Natural killer cell (primary cell): ENCODE measurements at regions of chr1 and their contacts with region 1.

Region 1: GRCh38 chr1:145906954-145907753 is 2.7 kb downstream of the ITGA10 start:
- DNase-seq: no peak
- ATAC-seq: no peak
- H3K4me3 ChIP-seq: no peak overlapping the region
- H3K4me3 Mint-ChIP-seq: no peak overlapping the region
- H3K27ac ChIP-seq: no peak overlapping the region
- H3K27ac Mint-ChIP-seq: no peak overlapping the region
- H3K4me1 ChIP-seq: peaks cover 3% of the 10 kb centered on the region
- H3K4me1 Mint-ChIP-seq: peaks cover 0 to 5% of the 10 kb centered on the region in 2 donors
- H3K27me3 ChIP-seq: no peaks in the 10 kb centered on the region
- H3K27me3 Mint-ChIP-seq: no peaks in the 10 kb centered on the region
- CTCF ChIP-seq: no peak

Region 2: GRCh38 chr1:145845514-145846161 is 61.5 kb before region 1 on chr1 and contains the start of gene NUDT17:
- intact Hi-C with region 1: loop called (anchors 1 kb)
- DNase-seq: peak; percentile 74 to 88
- ATAC-seq: peak; percentile 86 to 89 (median 87)
- H3K4me3 ChIP-seq: peak within 1 kb of the TSS; percentile 68
- H3K4me3 Mint-ChIP-seq: no peak within 1 kb of the TSS
- H3K27ac ChIP-seq: peak within 1 kb of the TSS; percentile 44
- H3K27ac Mint-ChIP-seq: no peak within 1 kb of the TSS
- H3K4me1 ChIP-seq: peaks cover 20% of the 10 kb centered on the region
- H3K4me1 Mint-ChIP-seq: no peaks in the 10 kb centered on the region
- H3K27me3 ChIP-seq: no peaks in the 10 kb centered on the region
- H3K27me3 Mint-ChIP-seq: no peaks in the 10 kb centered on the region
- CTCF ChIP-seq: peak; percentile 88
- total RNA-seq, gene NUDT17: 3.3 to 4.9 (median 3.4) TPM

Region 3: DNA sequence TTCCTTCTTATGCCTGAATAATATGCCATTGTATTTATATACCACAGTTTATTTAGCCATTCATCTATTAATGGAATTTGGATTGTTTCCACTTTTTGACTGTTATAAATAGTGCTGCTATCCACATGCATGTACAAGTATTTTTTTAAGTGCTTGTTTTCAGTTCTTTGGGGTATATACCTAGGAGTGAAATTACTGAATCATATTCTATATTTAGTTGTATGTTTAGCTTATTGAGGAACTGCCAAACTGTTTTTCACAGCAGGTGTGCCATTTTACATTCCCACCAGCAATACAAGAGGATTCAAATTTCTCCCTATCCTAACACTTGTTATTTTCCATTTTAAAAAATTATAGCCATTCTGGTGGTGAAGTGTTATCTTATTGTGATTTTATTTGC is 122.0 kb after region 1 on chr1:
- intact Hi-C with region 1: no loop called
- DNase-seq: no peak
- ATAC-seq: no peak
- H3K4me3 ChIP-seq: no peak overlapping the region
- H3K4me3 Mint-ChIP-seq: no peak overlapping the region
- H3K27ac ChIP-seq: no peak overlapping the region
- H3K27ac Mint-ChIP-seq: no peak overlapping the region
- H3K4me1 ChIP-seq: no peaks in the 10 kb centered on the region
- H3K4me1 Mint-ChIP-seq: peaks cover 0 to 4% of the 10 kb centered on the region in 2 donors
- H3K27me3 ChIP-seq: peaks cover 2% of the 10 kb centered on the region
- H3K27me3 Mint-ChIP-seq: peaks cover 8 to 14% of the 10 kb centered on the region in 2 donors
- CTCF ChIP-seq: no peak